ENCODE measurements at regions of chr14 and their contacts with region 1.

Region 1: GRCh38 chr14:63641473-63642228 is at the start of gene WDR89:
- DNase-seq: peak; percentile 84 to 99 (median 97)
- ATAC-seq: peak; percentile 92
- H3K4me3 ChIP-seq: peak within 1 kb of the TSS; percentile 76
- H3K4me3 Mint-ChIP-seq: peak within 1 kb of the TSS; percentile 84 to 98 (median 91)
- H3K27ac ChIP-seq: peak within 1 kb of the TSS; percentile 95
- H3K27ac Mint-ChIP-seq: peak within 1 kb of the TSS; percentile 88 to 100 (median 97)
- H3K4me1 ChIP-seq: peaks cover 17 to 28% of the 10 kb centered on the region in 2 donors
- H3K4me1 Mint-ChIP-seq: peaks cover 24 to 63% (median 46%) of the 10 kb centered on the region in 7 donors
- H3K27me3 ChIP-seq: no peaks in the 10 kb centered on the region
- H3K27me3 Mint-ChIP-seq: no peaks in the 10 kb centered on the region
- total RNA-seq, gene WDR89: 12.6 to 44.1 (median 24.0) TPM

Region 2: DNA sequence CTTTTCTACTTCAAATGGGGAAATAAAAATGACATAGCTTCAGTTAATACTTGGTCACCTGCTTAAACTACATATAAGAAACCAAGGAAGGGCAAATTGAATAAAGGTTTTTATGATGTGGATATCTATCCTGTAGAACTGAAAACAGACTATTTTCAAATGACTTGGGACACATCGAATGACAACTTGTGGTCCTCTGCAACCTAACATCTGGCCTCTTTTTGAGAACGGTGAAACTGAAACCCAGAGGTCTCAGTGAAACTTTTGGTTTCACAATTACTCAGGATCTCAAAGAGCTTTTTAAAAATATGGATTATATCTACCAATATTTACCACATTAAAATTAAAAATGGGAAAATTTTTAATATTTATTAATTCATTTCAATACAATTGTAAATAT is 163.6 kb before region 1 on chr14:
- CTCF ChIA-PET with region 1: no interaction called
- POLR2A ChIA-PET with region 1: no interaction called
- intact Hi-C with region 1: loop called in 1 of 2 experiments (anchors 5 kb)
- DNase-seq: peak in 1 of 9 donors; percentile 14
- ATAC-seq: peak; percentile 60
- H3K4me3 ChIP-seq: peak overlapping the region; percentile 31
- H3K4me3 Mint-ChIP-seq: peak overlapping the region in 8 of 10 donors; percentile 22 to 75 (median 64)
- H3K27ac ChIP-seq: no peak overlapping the region
- H3K27ac Mint-ChIP-seq: peak overlapping the region in 4 of 9 donors; percentile 5 to 80 (median 57)
- H3K4me1 ChIP-seq: peaks cover 4 to 16% of the 10 kb centered on the region in 2 donors
- H3K4me1 Mint-ChIP-seq: peaks cover 21 to 60% (median 51%) of the 10 kb centered on the region in 7 donors
- H3K27me3 ChIP-seq: no peaks in the 10 kb centered on the region
- H3K27me3 Mint-ChIP-seq: no peaks in the 10 kb centered on the region

Region 3: DNA sequence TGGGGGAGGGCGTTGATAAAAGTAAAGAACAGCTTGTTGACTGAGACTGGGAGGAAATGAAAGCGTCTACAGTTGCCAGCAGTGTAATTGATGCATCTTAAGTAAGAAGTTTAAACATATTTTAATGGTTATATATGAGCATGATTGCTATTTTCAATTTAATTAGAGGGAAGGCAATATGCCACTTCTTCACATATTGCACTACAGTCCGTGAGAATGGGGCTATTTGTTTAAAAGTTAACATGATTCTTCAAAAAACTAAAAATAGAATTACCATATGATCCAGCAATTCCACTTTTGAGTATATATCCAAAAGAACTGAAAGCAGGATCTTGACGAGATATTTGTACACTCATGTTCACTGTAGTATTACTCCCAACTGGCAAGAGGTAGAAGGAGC is 60.2 kb before region 1 on chr14:
- CTCF ChIA-PET with region 1: no interaction called
- POLR2A ChIA-PET with region 1: no interaction called
- intact Hi-C with region 1: no loop called
- DNase-seq: no peak
- ATAC-seq: no peak
- H3K4me3 ChIP-seq: no peak overlapping the region
- H3K4me3 Mint-ChIP-seq: no peak overlapping the region
- H3K27ac ChIP-seq: no peak overlapping the region
- H3K27ac Mint-ChIP-seq: no peak overlapping the region
- H3K4me1 ChIP-seq: no peaks in the 10 kb centered on the region
- H3K4me1 Mint-ChIP-seq: no peaks in the 10 kb centered on the region
- H3K27me3 ChIP-seq: no peaks in the 10 kb centered on the region
- H3K27me3 Mint-ChIP-seq: peaks cover 0 to 9% (median 6%) of the 10 kb centered on the region in 5 donors

Region 4: GRCh38 chr14:63770187-63770807 is 128.6 kb after region 1 on chr14:
- CTCF ChIA-PET with region 1: interaction called, 5 read pairs
- POLR2A ChIA-PET with region 1: interaction called, 7 read pairs
- intact Hi-C with region 1: loop called in 1 of 2 experiments (anchors 2 kb)
- DNase-seq: peak in 7 of 9 donors; percentile 37 to 71 (median 62)
- ATAC-seq: peak; percentile 89
- H3K4me3 ChIP-seq: no peak overlapping the region
- H3K4me3 Mint-ChIP-seq: no peak overlapping the region
- H3K27ac ChIP-seq: no peak overlapping the region
- H3K27ac Mint-ChIP-seq: peak overlapping the region in 2 of 9 donors; percentile 4 to 5
- H3K4me1 ChIP-seq: peaks cover 0 to 4% of the 10 kb centered on the region in 2 donors
- H3K4me1 Mint-ChIP-seq: peaks cover 0 to 20% (median 9%) of the 10 kb centered on the region in 7 donors
- H3K27me3 ChIP-seq: no peaks in the 10 kb centered on the region
- H3K27me3 Mint-ChIP-seq: peaks cover 0 to 4% (median 0%) of the 10 kb centered on the region in 5 donors

Region 5: GRCh38 chr14:63938198-63939005 is 296.8 kb after region 1 on chr14:
- CTCF ChIA-PET with region 1: no interaction called
- POLR2A ChIA-PET with region 1: no interaction called
- intact Hi-C with region 1: loop called in 1 of 2 experiments (anchors 5 kb)
- DNase-seq: peak in 4 of 9 donors; percentile 11 to 25 (median 16)
- ATAC-seq: peak; percentile 58
- H3K4me3 ChIP-seq: peak overlapping the region; percentile 3
- H3K4me3 Mint-ChIP-seq: no peak overlapping the region
- H3K27ac ChIP-seq: peak overlapping the region; percentile 42
- H3K27ac Mint-ChIP-seq: no peak overlapping the region
- H3K4me1 ChIP-seq: peaks cover 41 to 46% of the 10 kb centered on the region in 2 donors
- H3K4me1 Mint-ChIP-seq: peaks cover 22 to 45% (median 40%) of the 10 kb centered on the region in 7 donors
- H3K27me3 ChIP-seq: no peaks in the 10 kb centered on the region
- H3K27me3 Mint-ChIP-seq: no peaks in the 10 kb centered on the region

Region 6: DNA sequence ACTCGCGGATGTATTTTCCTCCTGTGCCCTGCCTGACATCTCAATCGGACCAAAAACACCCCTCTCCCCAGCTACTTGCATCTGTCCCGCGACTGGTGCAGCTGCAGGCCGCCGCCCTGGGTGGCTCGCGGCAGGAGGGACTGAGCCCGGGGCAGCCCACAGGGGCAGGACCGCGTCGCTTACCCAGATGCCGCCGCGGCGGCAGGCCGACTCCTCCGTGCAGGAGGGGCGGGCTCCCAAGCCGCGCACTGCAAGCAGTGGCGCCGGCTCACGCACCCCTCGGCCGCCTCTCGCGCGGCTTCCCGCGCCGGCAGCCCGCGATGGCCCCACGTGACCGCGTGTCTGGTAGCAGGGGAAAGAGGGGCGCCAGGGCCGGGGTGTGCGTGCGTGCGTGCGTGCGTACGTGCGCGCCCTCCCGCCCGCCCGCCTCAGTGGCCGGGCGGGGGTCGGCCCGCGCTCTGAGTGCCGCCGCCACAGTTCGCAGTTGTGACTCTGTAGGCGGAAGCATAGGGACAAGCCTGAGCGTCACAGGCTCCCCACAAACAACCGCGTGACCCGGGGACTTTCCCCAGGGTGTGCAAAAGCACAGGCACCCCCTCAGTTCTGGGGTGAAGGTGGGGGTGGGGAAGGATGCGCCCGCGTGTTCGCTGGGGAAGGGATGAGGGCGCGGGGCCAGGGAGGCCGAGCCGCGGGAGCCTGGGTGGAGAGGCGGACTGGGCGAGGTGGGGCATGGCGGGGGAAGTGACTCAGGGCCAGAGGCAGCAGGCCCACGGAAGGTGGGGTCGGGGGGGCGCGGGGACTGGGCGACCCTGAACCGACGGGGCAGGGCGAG is 862.0 kb after region 1 on chr14 and contains the start of gene ZBTB25:
- CTCF ChIA-PET with region 1: no interaction called
- POLR2A ChIA-PET with region 1: interaction called, 11 read pairs
- intact Hi-C with region 1: loop called (anchors 1 kb)
- DNase-seq: peak; percentile 88 to 100 (median 98)
- ATAC-seq: peak; percentile 81
- H3K4me3 ChIP-seq: peak within 1 kb of the TSS; percentile 88
- H3K4me3 Mint-ChIP-seq: peak within 1 kb of the TSS; percentile 88 to 100 (median 98)
- H3K27ac ChIP-seq: peak within 1 kb of the TSS; percentile 99
- H3K27ac Mint-ChIP-seq: peak within 1 kb of the TSS; percentile 96 to 100 (median 100)
- H3K4me1 ChIP-seq: peaks cover 41 to 49% of the 10 kb centered on the region in 2 donors
- H3K4me1 Mint-ChIP-seq: peaks cover 44 to 70% (median 55%) of the 10 kb centered on the region in 7 donors
- H3K27me3 ChIP-seq: no peaks in the 10 kb centered on the region
- H3K27me3 Mint-ChIP-seq: peaks cover 0 to 3% (median 0%) of the 10 kb centered on the region in 5 donors
- total RNA-seq, gene ZBTB25: 37.6 to 88.0 (median 60.6) TPM

Region 7: DNA sequence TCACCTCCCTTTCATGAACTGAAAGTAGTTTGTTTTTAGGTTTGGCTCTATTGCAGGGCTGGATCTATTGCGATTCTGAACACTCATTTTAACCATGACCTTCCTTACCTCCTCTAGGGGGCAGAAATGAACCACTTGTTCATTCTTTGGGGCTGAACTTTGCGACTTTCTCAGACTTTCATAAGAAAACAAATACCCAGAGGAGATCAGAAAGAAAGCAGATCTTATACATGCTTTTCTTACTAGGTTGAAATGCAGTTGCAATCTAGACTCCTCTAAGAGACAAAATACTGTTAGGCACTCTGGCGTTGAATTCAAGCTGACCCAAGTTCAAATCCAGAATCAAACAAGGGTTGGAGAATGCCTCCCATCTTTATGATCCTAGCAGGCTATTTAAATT is 1029.9 kb after region 1 on chr14:
- CTCF ChIA-PET with region 1: no interaction called
- POLR2A ChIA-PET with region 1: no interaction called
- intact Hi-C with region 1: no loop called
- DNase-seq: peak in 7 of 9 donors; percentile 25 to 66 (median 50)
- ATAC-seq: peak; percentile 64
- H3K4me3 ChIP-seq: no peak overlapping the region
- H3K4me3 Mint-ChIP-seq: no peak overlapping the region
- H3K27ac ChIP-seq: no peak overlapping the region
- H3K27ac Mint-ChIP-seq: no peak overlapping the region
- H3K4me1 ChIP-seq: peaks cover 7 to 16% of the 10 kb centered on the region in 2 donors
- H3K4me1 Mint-ChIP-seq: peaks cover 9 to 38% (median 15%) of the 10 kb centered on the region in 7 donors
- H3K27me3 ChIP-seq: no peaks in the 10 kb centered on the region
- H3K27me3 Mint-ChIP-seq: peaks cover 0 to 26% (median 0%) of the 10 kb centered on the region in 5 donors

Region 8: GRCh38 chr14:65102441-65103149 is 1460.9 kb after region 1 on chr14 and contains the start of gene MAX:
- CTCF ChIA-PET with region 1: no interaction called
- POLR2A ChIA-PET with region 1: no interaction called
- intact Hi-C with region 1: loop called (anchors 2 to 5 kb)
- DNase-seq: peak; percentile 88 to 100 (median 99)
- ATAC-seq: peak; percentile 95
- H3K4me3 ChIP-seq: peak within 1 kb of the TSS; percentile 96
- H3K4me3 Mint-ChIP-seq: peak within 1 kb of the TSS; percentile 87 to 97 (median 91)
- H3K27ac ChIP-seq: peak within 1 kb of the TSS; percentile 100
- H3K27ac Mint-ChIP-seq: peak within 1 kb of the TSS; percentile 91 to 99 (median 94)
- H3K4me1 ChIP-seq: peaks cover 17 to 34% of the 10 kb centered on the region in 2 donors
- H3K4me1 Mint-ChIP-seq: peaks cover 28 to 43% (median 42%) of the 10 kb centered on the region in 7 donors
- H3K27me3 ChIP-seq: no peaks in the 10 kb centered on the region
- H3K27me3 Mint-ChIP-seq: peaks cover 0 to 12% (median 0%) of the 10 kb centered on the region in 5 donors
- total RNA-seq, gene MAX: 164 to 236 (median 202) TPM